ENCODE measurements at regions of chr1 and their contacts with region 1.

Region 1: DNA sequence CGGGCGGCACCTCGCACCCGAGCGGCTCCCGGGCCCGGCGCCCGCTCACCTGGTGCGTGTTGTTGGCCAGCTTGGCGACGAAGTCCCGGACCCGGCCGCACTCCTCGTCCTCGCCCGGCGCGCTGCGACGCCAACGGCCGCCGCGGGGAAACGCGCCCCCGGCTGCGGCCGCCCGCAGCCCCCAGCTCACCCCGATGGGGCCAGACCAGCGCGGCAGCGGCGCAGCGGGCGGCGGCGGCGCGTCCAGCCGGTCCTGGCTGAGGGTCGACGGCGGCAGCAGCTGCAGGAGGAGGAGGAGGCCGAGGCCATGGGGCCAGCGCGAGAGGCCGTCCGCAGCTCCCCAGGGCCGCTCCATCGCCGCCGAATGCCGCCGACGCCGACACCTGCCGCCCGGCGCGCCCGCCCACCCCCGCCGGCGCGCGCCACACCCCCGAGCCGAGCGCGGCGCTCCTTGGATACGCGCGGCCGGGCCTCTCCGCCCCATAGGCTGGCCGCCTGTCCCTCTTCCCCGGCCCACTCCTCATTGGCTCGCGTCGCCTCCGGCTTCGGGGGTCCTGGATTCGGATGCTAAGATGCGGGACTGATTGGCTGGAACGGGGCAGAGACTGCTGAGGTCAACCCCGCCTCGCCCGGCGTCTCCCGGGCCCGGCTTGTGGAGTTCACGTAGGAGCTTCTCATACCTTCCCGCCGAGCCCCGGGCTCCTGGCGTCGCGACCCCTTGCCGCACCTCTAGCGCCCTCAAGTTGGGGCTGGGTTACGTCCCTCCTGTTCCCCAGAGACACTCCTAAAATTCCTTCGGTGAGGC is at the start of gene SORT1:
- DNase-seq: peak; percentile 75
- ATAC-seq: peak; percentile 92
- H3K4me3 ChIP-seq: peak within 1 kb of the TSS; percentile 20 to 52 (median 46)
- H3K4me3 Mint-ChIP-seq: peak within 1 kb of the TSS; percentile 88
- H3K27ac ChIP-seq: no peak within 1 kb of the TSS
- H3K27ac Mint-ChIP-seq: peak within 1 kb of the TSS; percentile 26
- H3K4me1 ChIP-seq: peaks cover 18 to 20% of the 10 kb centered on the region in 2 donors
- H3K4me1 Mint-ChIP-seq: peaks cover 22% of the 10 kb centered on the region
- H3K27me3 ChIP-seq: peaks cover 0 to 39% (median 34%) of the 10 kb centered on the region in 4 experiments
- H3K27me3 Mint-ChIP-seq: peaks cover 51% of the 10 kb centered on the region
- CTCF ChIP-seq: no peak
- total RNA-seq, gene SORT1: 0.05 and 0.25 TPM in 2 replicates

Region 2: GRCh38 chr1:108767115-108767514 is 630.6 kb before region 1 on chr1:
- CTCF ChIA-PET with region 1: no interaction called
- POLR2A ChIA-PET with region 1: no interaction called
- intact Hi-C with region 1: no loop called
- DNase-seq: no peak
- ATAC-seq: no peak
- H3K4me3 ChIP-seq: no peak overlapping the region
- H3K4me3 Mint-ChIP-seq: no peak overlapping the region
- H3K27ac ChIP-seq: no peak overlapping the region
- H3K27ac Mint-ChIP-seq: no peak overlapping the region
- H3K4me1 ChIP-seq: no peaks in the 10 kb centered on the region
- H3K4me1 Mint-ChIP-seq: no peaks in the 10 kb centered on the region
- H3K27me3 ChIP-seq: no peaks in the 10 kb centered on the region
- H3K27me3 Mint-ChIP-seq: no peaks in the 10 kb centered on the region
- CTCF ChIP-seq: no peak

Region 3: GRCh38 chr1:108841703-108842102 is 556.0 kb before region 1 on chr1:
- CTCF ChIA-PET with region 1: no interaction called
- POLR2A ChIA-PET with region 1: no interaction called
- intact Hi-C with region 1: no loop called
- DNase-seq: no peak
- ATAC-seq: no peak
- H3K4me3 ChIP-seq: no peak overlapping the region
- H3K4me3 Mint-ChIP-seq: no peak overlapping the region
- H3K27ac ChIP-seq: no peak overlapping the region
- H3K27ac Mint-ChIP-seq: no peak overlapping the region
- H3K4me1 ChIP-seq: no peaks in the 10 kb centered on the region
- H3K4me1 Mint-ChIP-seq: no peaks in the 10 kb centered on the region
- H3K27me3 ChIP-seq: no peaks in the 10 kb centered on the region
- H3K27me3 Mint-ChIP-seq: no peaks in the 10 kb centered on the region
- CTCF ChIP-seq: no peak

Region 4: DNA sequence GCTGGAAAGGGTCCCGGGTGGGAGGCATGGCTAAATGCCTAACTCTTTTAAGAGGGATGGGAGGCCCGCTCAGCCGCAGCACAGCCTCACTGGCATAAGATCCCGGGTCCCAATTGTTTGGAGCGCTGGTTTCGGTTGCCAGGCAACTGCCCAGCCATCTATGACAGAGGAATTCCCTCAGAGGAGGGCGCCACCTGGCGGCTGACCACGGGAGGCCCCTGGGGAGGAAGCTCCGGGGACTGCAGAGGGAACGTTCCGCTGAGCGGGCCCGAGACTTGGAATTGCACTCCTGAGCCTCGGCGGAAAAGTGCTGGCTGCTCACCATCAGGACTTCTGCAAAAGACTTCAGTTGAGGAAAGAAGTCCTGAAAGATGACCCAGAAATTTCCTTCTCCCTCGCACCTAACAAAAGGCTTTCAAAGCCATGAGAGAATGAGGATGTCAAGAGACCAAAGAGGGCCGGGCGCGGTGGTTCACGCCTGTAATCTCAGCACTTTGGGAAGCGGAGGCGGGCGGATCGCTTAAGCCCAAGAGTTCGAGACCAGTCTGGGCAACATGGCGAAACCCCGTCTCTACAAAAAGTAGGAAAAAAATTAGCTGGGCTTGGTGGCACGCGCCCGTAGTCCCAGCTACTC is 285.0 kb before region 1 on chr1:
- CTCF ChIA-PET with region 1: interaction called, 5 read pairs
- POLR2A ChIA-PET with region 1: no interaction called
- intact Hi-C with region 1: loop called (anchors 5 kb)
- DNase-seq: peak; percentile 91
- ATAC-seq: peak; percentile 69
- H3K4me3 ChIP-seq: peak overlapping the region; percentile 30 to 54 (median 37)
- H3K4me3 Mint-ChIP-seq: peak overlapping the region; percentile 85
- H3K27ac ChIP-seq: peak overlapping the region in 1 of 2 donors; percentile 45
- H3K27ac Mint-ChIP-seq: peak overlapping the region; percentile 75
- H3K4me1 ChIP-seq: peaks cover 25 to 26% of the 10 kb centered on the region in 2 donors
- H3K4me1 Mint-ChIP-seq: peaks cover 27% of the 10 kb centered on the region
- H3K27me3 ChIP-seq: peaks cover 0 to 23% (median 20%) of the 10 kb centered on the region in 4 experiments
- H3K27me3 Mint-ChIP-seq: peaks cover 31% of the 10 kb centered on the region
- CTCF ChIP-seq: peak; percentile 85

Region 5: GRCh38 chr1:109263597-109264398 is 133.9 kb before region 1 on chr1:
- CTCF ChIA-PET with region 1: interaction called, 73 read pairs
- POLR2A ChIA-PET with region 1: no interaction called
- intact Hi-C with region 1: loop called (anchors 1 kb)
- DNase-seq: peak; percentile 80
- ATAC-seq: peak; percentile 92
- H3K4me3 ChIP-seq: no peak overlapping the region
- H3K4me3 Mint-ChIP-seq: no peak overlapping the region
- H3K27ac ChIP-seq: no peak overlapping the region
- H3K27ac Mint-ChIP-seq: no peak overlapping the region
- H3K4me1 ChIP-seq: peaks cover 0 to 3% of the 10 kb centered on the region in 2 donors
- H3K4me1 Mint-ChIP-seq: peaks cover 4% of the 10 kb centered on the region
- H3K27me3 ChIP-seq: peaks cover 0 to 4% (median 0%) of the 10 kb centered on the region in 4 experiments
- H3K27me3 Mint-ChIP-seq: peaks cover 4% of the 10 kb centered on the region
- CTCF ChIP-seq: peak; percentile 93

Region 6: DNA sequence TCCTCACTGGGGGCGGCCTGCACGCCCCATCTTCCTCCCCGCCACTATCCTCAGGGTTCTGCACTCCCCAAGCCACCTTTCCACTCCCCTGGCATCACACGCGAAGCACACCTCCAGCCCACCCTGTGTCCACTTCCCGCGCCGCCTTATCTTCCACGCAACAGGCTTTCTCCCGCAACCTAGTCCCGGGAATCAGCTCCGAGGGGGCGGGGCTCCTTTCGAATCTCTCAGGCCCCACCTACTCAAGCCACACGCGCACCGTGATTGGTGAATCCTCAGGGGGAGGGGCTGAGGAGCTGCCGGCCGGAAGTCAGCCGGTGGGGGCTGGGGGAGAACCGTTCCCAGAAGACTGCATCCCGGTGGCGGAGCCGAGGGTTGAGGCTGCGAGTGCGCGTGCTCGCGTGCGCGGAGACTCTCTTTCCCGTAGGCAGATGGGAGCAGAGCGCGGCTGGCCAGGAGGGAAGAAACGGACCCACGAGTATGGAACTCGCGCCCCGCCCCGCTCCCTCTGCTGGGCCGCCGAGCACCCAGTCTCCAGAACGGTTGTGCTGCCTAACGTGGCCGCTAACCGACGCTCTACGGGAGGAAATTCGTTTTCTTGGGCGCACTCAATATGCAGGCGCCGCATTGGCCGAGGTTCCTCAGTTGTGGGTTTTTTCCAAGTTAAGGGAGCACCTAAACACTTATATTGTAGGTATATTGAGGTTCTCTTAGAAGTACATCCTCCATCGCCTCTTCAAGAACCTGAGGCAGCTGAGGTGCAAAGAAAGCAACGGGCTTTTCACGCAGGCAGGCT is 114.6 kb before region 1 on chr1 and contains the start of gene PSRC1:
- CTCF ChIA-PET with region 1: interaction called, 387 read pairs
- POLR2A ChIA-PET with region 1: no interaction called
- intact Hi-C with region 1: loop called (anchors 1 kb)
- DNase-seq: peak; percentile 94
- ATAC-seq: peak; percentile 99
- H3K4me3 ChIP-seq: peak within 1 kb of the TSS; percentile 68 to 93 (median 80)
- H3K4me3 Mint-ChIP-seq: peak within 1 kb of the TSS; percentile 97
- H3K27ac ChIP-seq: peak within 1 kb of the TSS in 1 of 2 donors; percentile 22
- H3K27ac Mint-ChIP-seq: peak within 1 kb of the TSS; percentile 88
- H3K4me1 ChIP-seq: peaks cover 12 to 19% of the 10 kb centered on the region in 2 donors
- H3K4me1 Mint-ChIP-seq: peaks cover 16% of the 10 kb centered on the region
- H3K27me3 ChIP-seq: no peaks in the 10 kb centered on the region
- H3K27me3 Mint-ChIP-seq: peaks cover 3% of the 10 kb centered on the region
- CTCF ChIP-seq: peak; percentile 71
- total RNA-seq, gene PSRC1: not detected in 2 replicates

Region 7: DNA sequence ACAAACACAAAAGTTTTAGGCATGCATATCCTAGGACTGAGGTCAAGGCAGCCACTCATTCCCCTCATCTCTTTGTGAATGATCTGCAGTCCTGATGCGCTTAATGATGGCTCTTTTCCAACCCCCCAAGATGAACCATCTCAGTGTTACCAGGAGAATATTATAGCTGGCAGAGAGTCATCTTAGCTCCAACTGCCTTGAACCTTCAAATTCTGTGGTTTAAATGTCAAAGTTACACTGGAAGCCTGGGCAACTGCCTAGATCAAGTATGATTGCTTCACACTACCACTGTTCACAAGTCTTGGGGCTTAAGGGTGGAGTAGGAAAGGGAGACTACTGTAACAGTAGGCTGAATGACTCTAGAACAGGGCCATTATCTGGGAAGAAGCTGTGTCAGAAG is 82.9 kb before region 1 on chr1:
- CTCF ChIA-PET with region 1: no interaction called
- POLR2A ChIA-PET with region 1: interaction called, 10 read pairs
- intact Hi-C with region 1: no loop called
- DNase-seq: no peak
- ATAC-seq: no peak
- H3K4me3 ChIP-seq: no peak overlapping the region
- H3K4me3 Mint-ChIP-seq: no peak overlapping the region
- H3K27ac ChIP-seq: no peak overlapping the region
- H3K27ac Mint-ChIP-seq: no peak overlapping the region
- H3K4me1 ChIP-seq: no peaks in the 10 kb centered on the region
- H3K4me1 Mint-ChIP-seq: no peaks in the 10 kb centered on the region
- H3K27me3 ChIP-seq: no peaks in the 10 kb centered on the region
- H3K27me3 Mint-ChIP-seq: peaks cover 5% of the 10 kb centered on the region
- CTCF ChIP-seq: no peak

Region 8: DNA sequence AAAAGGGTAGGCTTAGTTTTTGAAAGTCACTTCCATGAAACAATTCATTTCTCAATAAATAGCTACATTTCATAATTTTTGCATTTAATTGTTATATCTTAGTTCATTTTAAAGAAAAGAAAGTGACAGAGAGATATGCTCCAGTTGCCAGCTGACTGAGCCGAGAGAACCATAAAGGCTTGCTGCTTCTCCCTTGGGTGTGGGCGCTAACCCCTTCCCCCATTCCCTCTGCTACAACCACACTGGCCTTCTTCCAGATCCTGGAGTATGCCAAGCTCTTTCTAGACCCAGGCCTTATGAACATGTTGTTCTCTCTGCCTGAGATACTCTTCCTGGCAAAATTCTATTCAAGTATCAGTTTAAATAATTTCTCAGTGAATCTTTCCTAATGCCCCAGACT is 12.3 kb before region 1 on chr1:
- CTCF ChIA-PET with region 1: interaction called, 25 read pairs
- POLR2A ChIA-PET with region 1: no interaction called
- intact Hi-C with region 1: no loop called
- DNase-seq: no peak
- ATAC-seq: no peak
- H3K4me3 ChIP-seq: no peak overlapping the region
- H3K4me3 Mint-ChIP-seq: no peak overlapping the region
- H3K27ac ChIP-seq: no peak overlapping the region
- H3K27ac Mint-ChIP-seq: no peak overlapping the region
- H3K4me1 ChIP-seq: peaks cover 2 to 7% of the 10 kb centered on the region in 2 donors
- H3K4me1 Mint-ChIP-seq: peaks cover 4% of the 10 kb centered on the region
- H3K27me3 ChIP-seq: peaks cover 0 to 39% (median 36%) of the 10 kb centered on the region in 4 experiments
- H3K27me3 Mint-ChIP-seq: peaks cover 57% of the 10 kb centered on the region
- CTCF ChIP-seq: no peak